ENCODE measurements at regions of chr14 and their contacts with region 1.

Region 1: GRCh38 chr14:49908432-49908781 is 15.5 kb downstream of the ARF6 start:
- DNase-seq: no peak
- ATAC-seq: peak; percentile 11
- H3K4me3 ChIP-seq: no peak overlapping the region
- H3K27ac ChIP-seq: peak overlapping the region; percentile 72
- H3K4me1 ChIP-seq: peaks cover 38 to 66% of the 10 kb centered on the region in 2 experiments
- H3K27me3 ChIP-seq: no peaks in the 10 kb centered on the region
- CTCF ChIP-seq: no peak
- POLR2A ChIP-seq: no peak
- RAD21 ChIP-seq: no peak

Region 2: DNA sequence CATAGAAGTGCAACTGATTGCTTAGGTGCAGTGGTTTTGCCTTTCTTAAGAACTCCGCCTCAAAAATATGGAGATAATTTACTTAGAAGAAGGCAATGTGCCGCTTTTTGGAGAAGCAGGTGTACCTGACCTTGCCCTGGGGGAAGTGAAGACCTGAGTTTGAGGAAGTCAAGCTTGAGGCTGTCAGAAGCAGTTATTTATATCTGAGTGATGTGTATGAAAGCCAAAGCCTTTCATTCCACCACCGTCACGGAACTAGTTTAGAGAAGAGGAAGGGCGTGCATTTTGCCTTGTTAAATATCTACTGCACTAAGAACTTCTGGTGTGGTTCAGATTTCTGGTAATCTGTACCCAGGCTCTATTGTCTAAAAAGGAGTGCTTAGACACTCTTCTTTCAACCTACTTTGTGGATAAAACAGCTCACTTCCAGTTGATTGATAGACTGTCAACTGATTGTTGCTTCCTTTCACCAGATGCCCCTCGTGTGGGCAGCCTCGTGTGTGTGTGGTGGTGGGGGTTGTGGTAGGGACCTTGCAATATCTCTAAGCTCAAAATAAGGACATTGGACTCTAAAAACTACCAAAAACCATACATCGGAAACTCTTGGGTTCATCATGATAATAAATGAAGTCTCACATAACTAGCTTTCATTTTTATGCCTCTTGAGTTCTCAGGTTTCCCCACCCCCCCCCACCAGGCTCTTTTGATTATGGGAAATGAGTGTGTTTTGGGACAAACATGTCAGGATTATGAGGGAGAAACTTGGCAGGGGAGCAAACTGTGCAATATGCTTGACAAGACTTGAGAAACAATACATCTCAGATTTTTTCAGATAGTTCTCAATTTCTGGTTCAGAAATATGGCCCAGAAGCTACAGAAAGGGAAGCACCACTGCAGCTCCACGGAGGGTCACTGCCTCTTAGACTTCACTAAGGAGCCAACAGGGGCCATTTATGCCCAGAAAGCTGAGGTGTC is 63.0 kb after region 1 on chr14:
- CTCF ChIA-PET with region 1: no interaction called
- POLR2A ChIA-PET with region 1: no interaction called
- RAD21 ChIA-PET with region 1: no interaction called
- intact Hi-C with region 1: loop called (anchors 5 kb)
- DNase-seq: no peak
- ATAC-seq: no peak
- H3K4me3 ChIP-seq: no peak overlapping the region
- H3K27ac ChIP-seq: peak overlapping the region; percentile 96
- H3K4me1 ChIP-seq: peaks cover 55 to 75% of the 10 kb centered on the region in 2 experiments
- H3K27me3 ChIP-seq: no peaks in the 10 kb centered on the region
- CTCF ChIP-seq: no peak
- POLR2A ChIP-seq: no peak
- RAD21 ChIP-seq: no peak

Measured in HCT116 (cell line).